Heart right ventricle (tissue), 16 donors: ENCODE measurements at regions of chr1 and their contacts with region 1.

Region 1: GRCh38 chr1:109773146-109773899 is 9.6 kb upstream of the EPS8L3 start:
- DNase-seq: peak; percentile 77 to 86
- ATAC-seq: peak; percentile 82 to 90 (median 87)
- H3K4me3 ChIP-seq: no peak overlapping the region
- H3K27ac ChIP-seq: no peak overlapping the region
- H3K4me1 ChIP-seq: peaks cover 0 to 21% (median 8%) of the 10 kb centered on the region in 9 donors
- H3K27me3 ChIP-seq: no peaks in the 10 kb centered on the region
- CTCF ChIP-seq: peak; percentile 77 to 93 (median 87)

Region 2: DNA sequence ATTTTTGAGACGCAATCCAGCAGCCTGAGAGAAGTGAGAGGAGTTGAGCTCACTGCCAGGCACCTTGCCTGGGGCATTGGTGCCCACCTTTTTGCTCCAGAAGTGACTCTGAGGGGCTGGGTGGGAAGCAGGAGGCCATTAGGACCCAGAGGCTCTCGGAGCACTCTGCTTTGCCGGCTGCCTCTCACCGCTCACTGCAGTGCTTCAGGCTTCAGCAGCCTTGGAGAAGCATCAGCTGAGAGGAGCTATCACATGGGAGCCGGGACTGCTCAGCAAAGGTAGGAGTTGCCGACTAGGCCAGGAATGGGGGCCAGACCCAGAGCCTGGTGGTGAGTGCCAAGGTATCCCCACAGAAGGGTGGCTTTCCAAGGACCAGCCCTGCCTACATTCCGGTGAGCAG is 233.6 kb before region 1 on chr1 and contains the start of gene GPR61:
- intact Hi-C with region 1: loop called in 2 of 10 experiments (anchors 2 to 5 kb)
- DNase-seq: no peak
- ATAC-seq: no peak
- H3K4me3 ChIP-seq: no peak within 1 kb of the TSS
- H3K27ac ChIP-seq: no peak within 1 kb of the TSS
- H3K4me1 ChIP-seq: peaks cover 0 to 31% (median 9%) of the 10 kb centered on the region in 9 donors
- H3K27me3 ChIP-seq: no peaks in the 10 kb centered on the region
- CTCF ChIP-seq: no peak
- total RNA-seq, gene GPR61: 0.11 to 1.0 (median 0.31) TPM in 8 of 10 donors, not detected in the others

Region 3: GRCh38 chr1:109548321-109549267 is 224.7 kb before region 1 on chr1 and contains the start of gene GNAI3:
- intact Hi-C with region 1: loop called (anchors 1 to 5 kb)
- DNase-seq: peak; percentile 95 to 97
- ATAC-seq: peak; percentile 96 to 99 (median 98)
- H3K4me3 ChIP-seq: peak within 1 kb of the TSS; percentile 69 to 96 (median 88)
- H3K27ac ChIP-seq: peak within 1 kb of the TSS; percentile 61 to 98 (median 95)
- H3K4me1 ChIP-seq: peaks cover 0 to 62% (median 46%) of the 10 kb centered on the region in 9 donors
- H3K27me3 ChIP-seq: no peaks in the 10 kb centered on the region
- CTCF ChIP-seq: no peak
- total RNA-seq, gene GNAI3: 2.1 to 3.6 (median 2.8) TPM

Region 4: DNA sequence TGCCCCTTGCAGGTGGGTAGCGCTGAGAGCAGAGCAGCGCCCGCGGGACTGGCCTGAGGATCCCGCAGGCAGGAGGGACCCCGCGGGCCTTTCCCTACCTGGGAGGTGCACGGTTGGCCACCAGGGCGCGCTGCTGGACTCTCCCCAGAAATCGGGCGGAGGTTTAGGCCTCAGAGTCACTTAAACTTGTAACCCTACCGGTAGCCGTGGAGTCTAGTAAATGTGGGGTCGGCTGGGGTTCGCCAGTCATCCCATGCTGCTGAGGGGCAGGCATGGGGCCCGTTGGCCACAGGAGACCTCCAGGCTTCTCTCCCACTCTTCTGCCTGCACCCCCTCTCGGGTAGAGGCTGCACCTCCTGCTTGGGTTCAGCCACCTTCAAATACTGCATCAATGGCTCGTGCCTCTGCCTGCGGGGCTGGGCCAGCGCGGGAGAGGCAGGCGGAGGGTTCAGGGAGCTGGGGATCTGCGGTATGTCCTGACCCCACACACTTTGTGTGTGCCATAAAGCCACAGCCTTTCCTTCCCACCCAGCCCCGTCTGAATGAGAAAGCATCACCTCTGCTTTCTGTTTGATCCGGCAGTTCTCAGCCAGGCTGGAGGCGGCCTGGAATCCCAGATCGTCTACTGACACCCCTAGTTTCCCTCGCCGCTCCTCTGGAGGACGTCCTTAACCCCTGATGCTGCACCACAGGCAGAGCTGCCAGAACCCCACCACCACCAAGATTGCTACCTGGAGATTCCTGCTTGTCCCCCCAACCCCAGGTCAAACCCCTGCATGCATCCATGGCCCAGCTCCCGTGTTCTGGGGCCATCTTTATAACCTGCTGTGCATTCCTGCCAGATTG is 129.7 kb before region 1 on chr1:
- intact Hi-C with region 1: loop called (anchors 2 to 5 kb)
- DNase-seq: peak; percentile 81 to 90
- ATAC-seq: peak; percentile 71 to 94 (median 89)
- H3K4me3 ChIP-seq: peak overlapping the region in 1 of 10 donors; percentile 7
- H3K27ac ChIP-seq: no peak overlapping the region
- H3K4me1 ChIP-seq: peaks cover 0 to 12% (median 6%) of the 10 kb centered on the region in 9 donors
- H3K27me3 ChIP-seq: no peaks in the 10 kb centered on the region
- CTCF ChIP-seq: peak; percentile 75 to 93 (median 88)

Region 5: DNA sequence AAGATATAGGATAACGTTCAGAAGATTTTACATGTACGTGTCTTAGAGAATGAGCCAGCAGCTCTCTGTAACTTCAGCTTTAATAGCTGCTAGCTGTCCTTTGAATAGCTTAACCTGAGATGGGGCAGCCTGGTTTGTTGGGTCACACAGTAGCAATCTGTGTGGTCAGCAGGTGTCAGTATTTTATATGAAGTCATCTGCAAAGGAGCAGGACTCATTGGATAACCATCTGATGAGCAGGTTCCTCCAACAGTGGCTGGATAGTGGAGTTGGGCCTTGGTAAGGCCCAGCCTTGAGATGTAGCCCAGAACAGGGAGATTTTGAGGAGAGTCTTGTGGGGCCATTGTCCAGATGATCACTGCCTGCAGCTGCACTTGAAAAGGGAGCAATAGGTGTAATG is 54.8 kb before region 1 on chr1:
- intact Hi-C with region 1: loop called in 7 of 10 experiments (anchors 1 to 5 kb)
- DNase-seq: no peak
- ATAC-seq: peak in 6 of 8 donors; percentile 37 to 77 (median 62)
- H3K4me3 ChIP-seq: no peak overlapping the region
- H3K27ac ChIP-seq: no peak overlapping the region
- H3K4me1 ChIP-seq: peaks cover 0 to 8% (median 0%) of the 10 kb centered on the region in 9 donors
- H3K27me3 ChIP-seq: no peaks in the 10 kb centered on the region
- CTCF ChIP-seq: peak in 6 of 9 donors; percentile 20 to 47 (median 42)

Region 6: GRCh38 chr1:109739738-109740660 is 33.3 kb before region 1 on chr1:
- intact Hi-C with region 1: loop called in 2 of 10 experiments (anchors 5 kb)
- DNase-seq: peak; percentile 82 to 86
- ATAC-seq: peak; percentile 95 to 99 (median 98)
- H3K4me3 ChIP-seq: peak overlapping the region; percentile 66 to 90 (median 76)
- H3K27ac ChIP-seq: peak overlapping the region; percentile 25 to 84 (median 74)
- H3K4me1 ChIP-seq: peaks cover 0 to 19% (median 13%) of the 10 kb centered on the region in 9 donors
- H3K27me3 ChIP-seq: peaks cover 0 to 15% (median 0%) of the 10 kb centered on the region in 7 donors
- CTCF ChIP-seq: no peak

Region 7: GRCh38 chr1:109910123-109910962 is 137.0 kb after region 1 on chr1 and contains the start of gene CSF1:
- intact Hi-C with region 1: loop called in 3 of 10 experiments (anchors 1 to 5 kb)
- DNase-seq: peak; percentile 83 to 88
- ATAC-seq: peak; percentile 69 to 88 (median 80)
- H3K4me3 ChIP-seq: peak within 1 kb of the TSS; percentile 69 to 97 (median 89)
- H3K27ac ChIP-seq: peak within 1 kb of the TSS; percentile 77 to 93 (median 88)
- H3K4me1 ChIP-seq: peaks cover 26 to 84% (median 62%) of the 10 kb centered on the region in 9 donors
- H3K27me3 ChIP-seq: peaks cover 0 to 17% (median 0%) of the 10 kb centered on the region in 7 donors
- CTCF ChIP-seq: peak in 2 of 9 donors; percentile 13 to 26
- total RNA-seq, gene CSF1: 6.3 to 26.2 (median 12.3) TPM